Transverse colon (tissue), 4 donors: ENCODE measurements at regions of chr14 and their contacts with region 1.

Region 1: GRCh38 chr14:61525293-61526011 is 169.9 kb upstream of the HIF1A start:
- DNase-seq: peak; percentile 38
- H3K4me3 ChIP-seq: no peak overlapping the region
- H3K27ac ChIP-seq: peak overlapping the region; percentile 14 to 75 (median 40)
- H3K4me1 ChIP-seq: peaks cover 6 to 55% (median 41%) of the 10 kb centered on the region in 4 donors
- H3K27me3 ChIP-seq: no peaks in the 10 kb centered on the region
- CTCF ChIP-seq: no peak
- EP300 ChIP-seq: no peak
- POLR2A ChIP-seq: no peak

Region 2: DNA sequence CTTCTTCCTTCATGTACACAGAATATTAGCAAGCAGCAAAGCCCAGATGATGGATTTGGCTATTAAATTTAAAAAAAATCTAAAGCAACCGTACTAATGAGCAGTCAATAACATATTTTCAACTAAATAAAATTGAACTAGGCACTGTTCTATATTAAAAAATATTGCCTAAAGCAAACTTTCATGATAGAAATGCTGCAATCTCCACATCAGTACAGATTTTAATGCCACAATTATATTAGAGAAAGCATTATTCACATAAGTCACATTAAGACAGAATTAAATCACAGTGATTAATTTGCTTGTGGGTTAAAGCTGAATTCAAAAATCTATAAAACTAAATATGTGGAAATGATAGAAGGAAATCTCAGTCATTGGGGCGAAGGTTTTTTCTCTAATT is 1319.1 kb after region 1 on chr14:
- in situ Hi-C with region 1: no loop called
- intact Hi-C with region 1: loop called (anchors 10 kb)
- DNase-seq: no peak
- H3K4me3 ChIP-seq: no peak overlapping the region
- H3K27ac ChIP-seq: no peak overlapping the region
- H3K4me1 ChIP-seq: no peaks in the 10 kb centered on the region
- H3K27me3 ChIP-seq: no peaks in the 10 kb centered on the region
- CTCF ChIP-seq: no peak
- EP300 ChIP-seq: no peak
- POLR2A ChIP-seq: no peak